ENCODE measurements at regions of chr9 and their contacts with region 1.

Region 1: GRCh38 chr9:79764381-79764780 is 192.6 kb downstream of the TLE4 start:
- DNase-seq: no peak
- H3K4me3 ChIP-seq: no peak overlapping the region
- H3K4me3 Mint-ChIP-seq: no peak overlapping the region
- H3K27ac Mint-ChIP-seq: no peak overlapping the region
- H3K4me1 ChIP-seq: no peaks in the 10 kb centered on the region
- H3K4me1 Mint-ChIP-seq: peaks cover 9% of the 10 kb centered on the region
- H3K27me3 ChIP-seq: no peaks in the 10 kb centered on the region
- H3K27me3 Mint-ChIP-seq: no peaks in the 10 kb centered on the region
- CTCF ChIP-seq: no peak

Region 2: DNA sequence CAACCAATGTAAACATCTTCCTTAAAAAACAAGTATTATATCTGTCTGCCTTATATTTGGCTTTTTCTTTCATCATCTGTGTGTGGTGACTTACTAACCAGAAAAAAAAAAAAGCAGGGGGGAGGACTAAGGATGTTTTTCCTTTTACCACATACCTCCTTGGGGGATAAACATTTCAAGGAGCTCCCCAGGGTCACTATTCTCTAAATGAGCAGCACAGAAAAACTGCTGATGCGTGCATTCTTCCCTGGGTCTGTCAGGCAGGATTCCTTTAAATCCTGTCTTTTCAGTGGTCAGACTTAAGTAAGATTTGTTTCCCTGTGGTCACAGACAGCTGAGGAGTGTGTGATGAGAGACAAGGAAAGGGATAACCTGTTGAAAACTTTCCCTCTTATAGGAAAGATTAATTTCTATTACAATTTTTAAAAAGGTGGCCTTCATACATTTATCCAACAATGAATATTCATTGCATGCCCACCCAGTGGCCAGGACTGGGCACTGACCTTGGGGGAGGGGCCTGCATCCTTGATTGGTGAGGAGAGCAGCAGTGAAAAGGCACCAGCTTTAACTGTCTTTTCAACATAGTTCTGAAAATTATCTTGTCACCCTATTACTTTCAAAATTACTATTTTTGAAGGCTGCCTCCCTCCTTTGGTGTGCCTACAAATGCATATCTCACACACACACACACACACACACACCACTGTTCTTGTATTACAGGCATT is 69.5 kb before region 1 on chr9:
- CTCF ChIA-PET with region 1: no interaction called
- POLR2A ChIA-PET with region 1: no interaction called
- intact Hi-C with region 1: no loop called
- DNase-seq: no peak
- H3K4me3 ChIP-seq: no peak overlapping the region
- H3K4me3 Mint-ChIP-seq: no peak overlapping the region
- H3K27ac Mint-ChIP-seq: no peak overlapping the region
- H3K4me1 ChIP-seq: no peaks in the 10 kb centered on the region
- H3K4me1 Mint-ChIP-seq: no peaks in the 10 kb centered on the region
- H3K27me3 ChIP-seq: no peaks in the 10 kb centered on the region
- H3K27me3 Mint-ChIP-seq: no peaks in the 10 kb centered on the region
- CTCF ChIP-seq: no peak

Region 3: DNA sequence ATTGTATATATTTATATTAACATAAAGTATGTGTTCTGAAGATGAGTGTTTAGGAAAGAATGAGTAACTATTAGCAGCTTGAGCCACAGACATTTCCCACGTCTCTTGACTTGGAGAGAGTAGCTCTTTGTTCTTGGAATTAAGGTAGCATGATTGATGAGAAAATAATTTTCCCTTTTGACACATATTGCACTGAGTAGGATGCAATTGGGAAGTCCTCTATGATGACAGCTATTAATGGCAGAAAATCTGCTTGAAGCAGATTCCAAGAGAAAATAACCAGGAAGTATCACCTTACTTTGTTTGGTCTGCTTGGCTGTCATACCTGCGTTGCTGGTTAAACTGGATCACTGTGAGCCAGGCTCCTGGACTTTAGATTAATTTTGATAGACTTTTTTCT is 12.2 kb after region 1 on chr9:
- CTCF ChIA-PET with region 1: no interaction called
- POLR2A ChIA-PET with region 1: no interaction called
- intact Hi-C with region 1: no loop called
- DNase-seq: no peak
- H3K4me3 ChIP-seq: no peak overlapping the region
- H3K4me3 Mint-ChIP-seq: no peak overlapping the region
- H3K27ac Mint-ChIP-seq: peak overlapping the region; percentile 81
- H3K4me1 ChIP-seq: no peaks in the 10 kb centered on the region
- H3K4me1 Mint-ChIP-seq: no peaks in the 10 kb centered on the region
- H3K27me3 ChIP-seq: no peaks in the 10 kb centered on the region
- H3K27me3 Mint-ChIP-seq: no peaks in the 10 kb centered on the region
- CTCF ChIP-seq: no peak

Region 4: GRCh38 chr9:79799691-79800335 is 35.4 kb after region 1 on chr9:
- CTCF ChIA-PET with region 1: no interaction called
- POLR2A ChIA-PET with region 1: no interaction called
- intact Hi-C with region 1: loop called (anchors 1 kb)
- DNase-seq: no peak
- H3K4me3 ChIP-seq: no peak overlapping the region
- H3K4me3 Mint-ChIP-seq: no peak overlapping the region
- H3K27ac Mint-ChIP-seq: no peak overlapping the region
- H3K4me1 ChIP-seq: no peaks in the 10 kb centered on the region
- H3K4me1 Mint-ChIP-seq: no peaks in the 10 kb centered on the region
- H3K27me3 ChIP-seq: no peaks in the 10 kb centered on the region
- H3K27me3 Mint-ChIP-seq: no peaks in the 10 kb centered on the region
- CTCF ChIP-seq: no peak